ENCODE measurements at regions of chr20 and their contacts with region 1.

Region 1: GRCh38 chr20:38859070-38859690 is 53.7 kb downstream of the PPP1R16B start:
- DNase-seq: no peak
- ATAC-seq: no peak
- H3K4me3 ChIP-seq: no peak overlapping the region
- H3K27ac ChIP-seq: no peak overlapping the region
- H3K4me1 ChIP-seq: peaks cover 0 to 36% (median 0%) of the 10 kb centered on the region in 12 donors
- H3K27me3 ChIP-seq: peaks cover 0 to 2% (median 0%) of the 10 kb centered on the region in 9 donors
- CTCF ChIP-seq: no peak
- POLR2A ChIP-seq: no peak

Region 2: GRCh38 chr20:38799203-38799602 is 60.0 kb before region 1 on chr20:
- intact Hi-C with region 1: loop called in 1 of 10 experiments (anchors 2 kb)
- DNase-seq: peak in 3 of 5 donors; percentile 29 to 57 (median 43)
- ATAC-seq: peak; percentile 58 to 91 (median 62)
- H3K4me3 ChIP-seq: no peak overlapping the region
- H3K27ac ChIP-seq: peak overlapping the region in 9 of 12 donors; percentile 37 to 83 (median 72)
- H3K4me1 ChIP-seq: peaks cover 0 to 28% (median 11%) of the 10 kb centered on the region in 12 donors
- H3K27me3 ChIP-seq: no peaks in the 10 kb centered on the region
- CTCF ChIP-seq: no peak
- POLR2A ChIP-seq: no peak

Measured in heart left ventricle (tissue), 16 donors.